IMR-90 (cell line): ENCODE measurements at regions of chr6 and their contacts with region 1.

Region 1: GRCh38 chr6:53956068-53956711 is 155.1 kb upstream of the MLIP start:
- DNase-seq: peak; percentile 70
- ATAC-seq: peak; percentile 97
- H3K4me3 ChIP-seq: no peak overlapping the region
- H3K27ac ChIP-seq: no peak overlapping the region
- H3K4me1 ChIP-seq: peaks cover 3% of the 10 kb centered on the region
- H3K27me3 ChIP-seq: no peaks in the 10 kb centered on the region
- CTCF ChIP-seq: peak; percentile 83
- POLR2A ChIP-seq: no peak
- RAD21 ChIP-seq: peak; percentile 89

Region 2: GRCh38 chr6:53513519-53513966 is 442.6 kb before region 1 on chr6:
- CTCF ChIA-PET with region 1: interaction called, 4 read pairs
- POLR2A ChIA-PET with region 1: no interaction called
- dilution Hi-C with region 1: no loop called
- in situ Hi-C with region 1: no loop called
- intact Hi-C with region 1: loop called (anchors 5 kb)
- DNase-seq: no peak
- ATAC-seq: peak; percentile 75
- H3K4me3 ChIP-seq: no peak overlapping the region
- H3K27ac ChIP-seq: peak overlapping the region; percentile 74; the same call in 1 of the 2 replicates
- H3K4me1 ChIP-seq: peaks cover 4% of the 10 kb centered on the region; the same call in 1 of the 2 replicates
- H3K27me3 ChIP-seq: no peaks in the 10 kb centered on the region
- CTCF ChIP-seq: peak; percentile 49
- POLR2A ChIP-seq: no peak
- RAD21 ChIP-seq: peak; percentile 61

Region 3: DNA sequence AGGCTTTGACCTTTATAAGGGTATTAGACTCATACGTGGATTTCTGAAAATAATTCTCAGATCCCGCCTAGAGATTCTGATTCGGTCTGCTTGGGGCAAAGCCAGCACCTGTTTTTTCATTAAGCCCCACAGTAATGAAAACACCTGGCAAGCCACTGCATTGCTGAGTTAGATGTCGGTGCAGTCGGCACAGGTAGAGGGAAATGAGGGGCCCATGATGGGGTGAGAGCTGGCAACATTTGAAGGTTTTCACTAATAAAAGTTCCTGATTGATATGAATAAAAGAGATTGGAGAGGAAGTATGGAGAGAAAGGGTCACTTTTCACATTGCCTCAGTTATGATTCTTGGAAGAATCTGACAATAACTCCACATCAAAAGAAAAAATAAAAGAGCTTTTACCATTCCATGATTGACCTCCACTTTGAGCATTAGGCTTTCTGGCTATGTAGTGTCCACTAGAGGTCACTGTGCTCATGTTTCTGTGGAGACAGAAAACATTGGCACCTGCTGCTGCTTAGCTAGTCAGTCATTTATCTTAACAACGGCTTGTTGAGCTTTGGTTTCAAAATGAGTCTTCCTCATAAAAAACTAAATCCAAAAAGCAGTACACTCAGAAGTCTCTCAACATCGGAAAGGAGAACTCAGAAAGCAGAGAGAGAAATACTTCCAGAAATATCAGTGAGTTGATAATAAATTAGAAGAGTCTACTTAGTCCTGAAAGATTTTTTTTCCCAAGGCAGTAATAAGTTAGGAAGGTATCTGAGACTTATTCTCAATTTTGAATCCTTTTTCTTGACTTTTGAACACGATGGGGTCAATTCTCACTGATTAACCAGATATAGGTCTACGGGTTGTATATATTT is 237.4 kb before region 1 on chr6:
- CTCF ChIA-PET with region 1: interaction called, 23 read pairs
- POLR2A ChIA-PET with region 1: no interaction called
- dilution Hi-C with region 1: no loop called
- in situ Hi-C with region 1: no loop called
- intact Hi-C with region 1: no loop called
- DNase-seq: peak; percentile 75
- ATAC-seq: peak; percentile 44; the same call in 1 of the 2 replicates
- H3K4me3 ChIP-seq: no peak overlapping the region
- H3K27ac ChIP-seq: no peak overlapping the region
- H3K4me1 ChIP-seq: peaks cover 6% of the 10 kb centered on the region
- H3K27me3 ChIP-seq: no peaks in the 10 kb centered on the region; the same call in 1 of the 2 replicates
- CTCF ChIP-seq: peak; percentile 74
- POLR2A ChIP-seq: no peak
- RAD21 ChIP-seq: peak; percentile 51

Region 4: DNA sequence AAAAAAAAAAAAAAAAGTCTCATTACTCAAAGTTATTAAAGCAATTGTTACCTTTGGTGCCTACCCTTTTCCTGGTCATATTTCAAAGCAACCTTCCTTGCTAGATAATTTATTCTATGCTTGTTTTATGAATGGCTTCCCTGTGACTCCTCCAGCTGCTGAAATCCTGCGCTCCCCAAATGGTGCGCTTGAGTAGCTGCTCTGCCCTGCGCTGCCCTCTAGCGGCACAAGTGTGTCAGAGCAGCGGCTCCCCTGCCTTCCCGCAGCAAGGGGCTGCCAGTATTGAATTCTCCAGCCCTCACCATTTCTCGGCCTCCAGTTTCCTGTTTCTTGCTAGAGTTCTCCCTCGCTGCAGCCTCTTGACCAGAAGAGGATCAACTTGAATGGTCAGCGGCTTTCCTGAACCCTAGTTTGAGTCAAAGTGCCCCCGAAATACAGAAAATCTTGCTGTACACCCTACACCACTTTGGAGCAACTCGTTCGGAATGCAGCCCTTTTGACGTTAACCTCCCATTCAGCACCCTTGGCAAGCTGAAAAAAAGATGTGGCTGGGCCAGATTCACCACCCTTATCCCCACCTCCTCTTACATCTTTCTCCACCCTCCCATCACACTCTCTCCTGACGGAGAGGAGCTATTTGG is 230.3 kb before region 1 on chr6:
- CTCF ChIA-PET with region 1: interaction called, 22 read pairs
- POLR2A ChIA-PET with region 1: no interaction called
- dilution Hi-C with region 1: no loop called
- in situ Hi-C with region 1: loop called (anchors 5 kb)
- intact Hi-C with region 1: loop called (anchors 1 kb)
- DNase-seq: peak; percentile 69
- ATAC-seq: peak; percentile 94
- H3K4me3 ChIP-seq: no peak overlapping the region
- H3K27ac ChIP-seq: no peak overlapping the region
- H3K4me1 ChIP-seq: peaks cover 3% of the 10 kb centered on the region; the same call in 1 of the 2 replicates
- H3K27me3 ChIP-seq: no peaks in the 10 kb centered on the region
- CTCF ChIP-seq: peak; percentile 95
- POLR2A ChIP-seq: no peak
- RAD21 ChIP-seq: peak; percentile 89

Region 5: DNA sequence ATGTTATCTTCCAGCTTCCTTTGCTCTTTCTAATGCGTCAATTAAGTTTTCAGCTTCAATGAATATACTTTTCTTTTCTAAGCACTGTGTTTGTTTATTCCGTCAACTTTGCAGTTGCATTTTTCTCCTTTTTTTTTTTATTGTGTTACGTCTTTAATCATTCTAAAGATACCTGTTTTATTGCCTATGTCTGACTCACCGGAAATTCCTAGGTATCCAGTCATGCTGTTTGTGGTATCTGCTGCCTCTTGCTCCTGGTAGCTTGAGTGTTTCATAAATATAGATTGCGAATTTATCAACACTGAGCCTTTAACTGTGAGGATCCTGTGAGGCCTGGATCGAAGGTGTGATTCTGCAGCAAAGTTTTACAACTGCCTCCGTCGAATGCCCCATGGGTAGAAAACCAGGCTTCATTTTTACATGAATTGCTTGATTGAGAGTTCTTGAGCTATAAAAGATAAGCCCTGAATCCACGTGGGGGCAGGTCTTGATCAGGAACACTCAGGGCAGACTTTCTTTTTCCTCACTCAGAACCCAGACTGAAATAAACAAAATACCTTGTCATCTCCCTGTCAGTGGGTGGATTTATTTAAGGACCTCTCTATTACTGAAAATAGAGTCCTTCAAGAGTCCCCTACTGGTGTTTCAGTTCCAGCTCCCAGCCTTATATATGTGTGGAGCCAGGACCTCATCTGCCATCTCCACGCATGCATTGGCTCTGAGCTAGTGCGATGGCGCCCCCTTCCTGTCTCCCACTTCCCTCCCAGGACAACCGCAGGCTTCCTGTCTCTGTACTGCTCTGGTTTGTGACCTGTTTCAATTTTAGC is 221.5 kb before region 1 on chr6:
- CTCF ChIA-PET with region 1: interaction called, 22 read pairs
- POLR2A ChIA-PET with region 1: no interaction called
- dilution Hi-C with region 1: no loop called
- in situ Hi-C with region 1: loop called (anchors 5 kb)
- intact Hi-C with region 1: no loop called
- DNase-seq: peak; percentile 78
- ATAC-seq: peak; percentile 74
- H3K4me3 ChIP-seq: no peak overlapping the region
- H3K27ac ChIP-seq: no peak overlapping the region
- H3K4me1 ChIP-seq: peaks cover 7% of the 10 kb centered on the region
- H3K27me3 ChIP-seq: no peaks in the 10 kb centered on the region
- CTCF ChIP-seq: peak; percentile 37
- POLR2A ChIP-seq: no peak
- RAD21 ChIP-seq: no peak

Region 6: DNA sequence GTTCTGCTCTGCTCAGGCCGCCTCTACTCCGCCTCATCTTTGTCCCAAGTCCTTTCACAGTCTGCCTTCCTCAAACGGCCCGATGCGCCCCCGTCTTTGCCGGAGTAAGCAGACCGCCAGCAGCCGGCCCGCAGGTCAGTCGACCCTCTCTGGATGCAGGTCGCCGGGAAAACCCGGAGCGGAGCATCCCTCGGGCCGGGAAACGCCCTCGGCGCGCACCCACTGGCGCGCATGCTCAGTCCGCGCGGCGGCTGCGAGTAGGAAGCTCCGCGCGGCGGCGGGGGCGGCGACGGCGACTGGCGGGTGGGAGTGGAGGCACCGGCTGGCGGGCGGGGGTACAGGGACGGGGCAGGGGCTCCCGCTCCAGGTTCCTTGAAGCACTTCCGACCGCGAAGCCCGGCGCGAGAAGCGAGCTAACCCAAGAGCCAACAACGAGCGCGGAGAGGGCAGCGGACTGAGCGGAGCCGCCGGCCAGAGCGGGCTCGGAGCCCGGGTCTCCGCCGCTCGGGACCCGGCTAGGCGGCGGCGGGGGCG is 161.4 kb before region 1 on chr6 and contains the start of gene LRRC1:
- CTCF ChIA-PET with region 1: interaction called, 67 read pairs
- POLR2A ChIA-PET with region 1: interaction called, 3 read pairs
- dilution Hi-C with region 1: no loop called
- in situ Hi-C with region 1: loop called (anchors 5 kb)
- intact Hi-C with region 1: loop called (anchors 1 kb)
- DNase-seq: peak; percentile 88
- ATAC-seq: peak; percentile 87
- H3K4me3 ChIP-seq: peak within 1 kb of the TSS; percentile 82
- H3K27ac ChIP-seq: peak within 1 kb of the TSS; percentile 79
- H3K4me1 ChIP-seq: peaks cover 7% of the 10 kb centered on the region
- H3K27me3 ChIP-seq: no peaks in the 10 kb centered on the region
- CTCF ChIP-seq: no peak
- POLR2A ChIP-seq: peak; percentile 33; the same call in 1 of the 2 replicates
- RAD21 ChIP-seq: no peak
- total RNA-seq, gene LRRC1: 6.1 and 6.7 TPM in 2 replicates

Region 7: DNA sequence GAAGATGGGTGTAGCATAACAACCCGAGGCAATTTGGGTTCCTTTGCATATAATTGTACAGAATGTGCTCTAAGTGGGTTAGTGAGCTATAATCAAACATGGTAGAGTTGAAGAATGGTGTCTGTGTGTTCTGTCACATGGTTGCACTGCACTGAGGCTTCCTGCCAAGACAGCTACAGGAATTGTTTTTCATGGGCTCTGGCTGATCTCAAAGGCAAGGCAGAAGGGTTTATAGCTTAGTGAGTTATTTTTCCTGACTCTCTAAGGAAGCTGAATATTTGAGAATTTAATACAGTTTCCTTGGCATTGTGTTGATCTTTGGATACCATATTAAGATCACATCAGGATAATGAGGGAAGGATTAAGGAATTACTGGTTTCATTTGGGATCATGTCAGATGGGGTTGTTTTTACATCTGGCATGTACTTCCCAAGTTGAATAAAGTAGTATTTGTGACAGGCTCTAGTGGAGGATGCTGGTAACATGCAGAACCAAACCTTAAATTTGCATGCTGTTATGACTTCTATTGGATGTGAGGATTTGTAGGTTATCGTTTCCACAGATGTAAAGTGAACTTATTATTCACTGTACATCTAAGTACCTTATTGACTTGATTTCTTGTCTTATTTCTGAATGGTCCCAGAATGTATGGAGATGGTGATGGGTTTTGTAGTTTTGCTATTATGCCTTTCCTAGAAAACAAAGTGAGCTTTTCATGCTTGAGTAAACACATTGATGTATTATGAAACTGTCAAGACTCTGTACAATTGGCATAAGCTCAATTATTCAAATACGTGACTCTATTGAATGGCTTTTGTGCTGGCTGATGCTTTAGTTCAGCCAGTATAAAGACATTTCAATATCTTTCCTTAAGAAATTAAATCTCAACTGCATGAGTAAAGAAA is 118.1 kb before region 1 on chr6:
- CTCF ChIA-PET with region 1: no interaction called
- POLR2A ChIA-PET with region 1: no interaction called
- dilution Hi-C with region 1: no loop called
- in situ Hi-C with region 1: no loop called
- intact Hi-C with region 1: no loop called
- DNase-seq: peak; percentile 22
- ATAC-seq: 0 out of 2 replicates have a peak, but pooled peaks have one; percentile 17
- H3K4me3 ChIP-seq: no peak overlapping the region
- H3K27ac ChIP-seq: no peak overlapping the region
- H3K4me1 ChIP-seq: no peaks in the 10 kb centered on the region; the same call in 1 of the 2 replicates
- H3K27me3 ChIP-seq: no peaks in the 10 kb centered on the region
- CTCF ChIP-seq: no peak
- POLR2A ChIP-seq: no peak
- RAD21 ChIP-seq: no peak